Mammary epithelial cell (primary cell): ENCODE measurements at regions of chr9 and their contacts with region 1.

Region 1: GRCh38 chr9:111896353-111896958 is at the start of gene UGCG:
- DNase-seq: peak; percentile 92
- H3K4me3 ChIP-seq: peak within 1 kb of the TSS; percentile 76 to 94 (median 88)
- H3K27ac ChIP-seq: peak within 1 kb of the TSS; percentile 81
- H3K4me1 ChIP-seq: peaks cover 17% of the 10 kb centered on the region
- H3K27me3 ChIP-seq: no peaks in the 10 kb centered on the region
- CTCF ChIP-seq: no peak
- total RNA-seq, gene UGCG: 44.8 to 51.2 TPM

Region 2: GRCh38 chr9:111759762-111760639 is 136.5 kb before region 1 on chr9:
- CTCF ChIA-PET with region 1: no interaction called
- dilution Hi-C with region 1: no loop called
- in situ Hi-C with region 1: loop called in 1 of 2 experiments (anchors 25 kb)
- intact Hi-C with region 1: loop called (anchors 1 kb)
- DNase-seq: peak; percentile 69
- H3K4me3 ChIP-seq: no peak overlapping the region
- H3K27ac ChIP-seq: peak overlapping the region; percentile 8
- H3K4me1 ChIP-seq: no peaks in the 10 kb centered on the region
- H3K27me3 ChIP-seq: no peaks in the 10 kb centered on the region
- CTCF ChIP-seq: peak; percentile 59 to 61

Region 3: DNA sequence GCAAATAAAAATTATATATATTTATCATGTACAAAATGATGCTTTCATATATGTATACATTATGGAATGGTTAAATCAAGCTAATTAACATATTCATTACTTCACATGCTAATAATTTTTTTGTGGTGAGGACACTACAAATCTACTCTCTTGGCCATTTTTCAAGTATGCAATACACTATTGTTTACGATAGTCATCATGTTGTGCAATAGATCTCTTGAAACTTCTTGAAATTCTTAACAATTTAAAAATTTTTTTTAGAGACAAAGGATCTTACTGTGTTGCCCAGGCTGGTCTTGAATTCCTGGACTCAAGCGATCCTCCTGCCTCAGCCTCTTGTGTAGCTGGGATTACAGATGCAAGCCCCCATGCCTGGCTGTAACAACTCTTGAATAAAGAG is 56.5 kb before region 1 on chr9:
- CTCF ChIA-PET with region 1: no interaction called
- dilution Hi-C with region 1: no loop called
- in situ Hi-C with region 1: no loop called
- intact Hi-C with region 1: no loop called
- DNase-seq: no peak
- H3K4me3 ChIP-seq: no peak overlapping the region
- H3K27ac ChIP-seq: no peak overlapping the region
- H3K4me1 ChIP-seq: no peaks in the 10 kb centered on the region
- H3K27me3 ChIP-seq: no peaks in the 10 kb centered on the region
- CTCF ChIP-seq: no peak

Region 4: DNA sequence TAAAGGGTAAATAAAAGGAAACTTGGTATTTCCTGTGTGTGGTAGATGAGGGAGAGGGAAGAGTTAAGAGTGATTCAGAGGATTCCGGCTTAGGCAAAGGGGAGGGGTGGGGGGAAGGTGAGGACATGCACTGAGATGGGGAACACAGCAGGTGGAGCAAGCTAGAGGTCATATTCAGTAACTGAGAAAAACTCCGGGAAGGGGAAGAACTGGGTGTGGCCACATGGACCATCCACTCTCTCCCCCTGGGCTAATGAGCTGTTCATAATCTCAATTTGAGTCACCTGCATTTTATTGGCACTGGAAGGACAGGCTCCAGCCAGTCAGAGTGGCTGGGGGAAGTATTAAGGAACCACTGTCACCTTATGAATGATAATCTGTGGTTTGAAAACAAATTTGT is 44.9 kb before region 1 on chr9:
- CTCF ChIA-PET with region 1: no interaction called
- dilution Hi-C with region 1: no loop called
- in situ Hi-C with region 1: no loop called
- intact Hi-C with region 1: loop called (anchors 1 kb)
- DNase-seq: peak; percentile 88
- H3K4me3 ChIP-seq: no peak overlapping the region
- H3K27ac ChIP-seq: peak overlapping the region; percentile 44
- H3K4me1 ChIP-seq: peaks cover 19% of the 10 kb centered on the region
- H3K27me3 ChIP-seq: no peaks in the 10 kb centered on the region
- CTCF ChIP-seq: peak in 1 of 2 donors; percentile 29

Region 5: GRCh38 chr9:111937781-111938426 is 41.4 kb after region 1 on chr9:
- CTCF ChIA-PET with region 1: no interaction called
- dilution Hi-C with region 1: no loop called
- in situ Hi-C with region 1: no loop called
- intact Hi-C with region 1: loop called (anchors 5 kb)
- DNase-seq: peak; percentile 46
- H3K4me3 ChIP-seq: no peak overlapping the region
- H3K27ac ChIP-seq: no peak overlapping the region
- H3K4me1 ChIP-seq: peaks cover 12% of the 10 kb centered on the region
- H3K27me3 ChIP-seq: no peaks in the 10 kb centered on the region
- CTCF ChIP-seq: no peak

Region 6: GRCh38 chr9:112041536-112042243 is 145.2 kb after region 1 on chr9:
- CTCF ChIA-PET with region 1: no interaction called
- dilution Hi-C with region 1: no loop called
- in situ Hi-C with region 1: no loop called
- intact Hi-C with region 1: loop called (anchors 1 kb)
- DNase-seq: peak; percentile 99
- H3K4me3 ChIP-seq: no peak overlapping the region
- H3K27ac ChIP-seq: peak overlapping the region; percentile 52
- H3K4me1 ChIP-seq: peaks cover 60% of the 10 kb centered on the region
- H3K27me3 ChIP-seq: no peaks in the 10 kb centered on the region
- CTCF ChIP-seq: no peak

Region 7: DNA sequence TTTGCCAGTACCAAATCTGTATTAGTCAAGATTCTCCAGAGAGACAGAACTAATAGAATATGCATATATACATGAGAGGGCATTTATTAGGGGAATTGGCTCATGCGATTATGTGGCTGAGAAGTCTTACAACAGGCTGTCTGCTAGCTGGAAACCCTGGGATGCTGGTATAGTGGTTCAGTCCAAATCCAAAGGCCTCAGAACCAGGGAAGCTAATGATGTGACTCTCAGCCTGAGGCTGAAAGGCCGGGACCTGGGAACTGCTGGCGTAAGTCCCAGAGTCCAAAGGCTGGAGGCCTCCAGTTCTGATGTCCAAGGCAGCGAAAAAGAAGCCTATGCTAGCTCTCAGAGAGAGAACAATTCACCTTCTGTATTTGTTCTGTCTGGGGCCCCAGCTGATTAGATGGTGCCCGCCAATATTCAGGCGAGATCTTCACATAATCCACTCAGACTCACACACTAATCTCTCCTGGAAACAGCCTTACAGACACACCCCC is 674.3 kb after region 1 on chr9:
- CTCF ChIA-PET with region 1: no interaction called
- dilution Hi-C with region 1: no loop called
- in situ Hi-C with region 1: no loop called
- intact Hi-C with region 1: no loop called
- DNase-seq: no peak
- H3K4me3 ChIP-seq: no peak overlapping the region
- H3K27ac ChIP-seq: no peak overlapping the region
- H3K4me1 ChIP-seq: no peaks in the 10 kb centered on the region
- H3K27me3 ChIP-seq: no peaks in the 10 kb centered on the region
- CTCF ChIP-seq: no peak

Region 8: GRCh38 chr9:113150670-113151611 is 1254.5 kb after region 1 on chr9 and contains the start of gene SLC31A2:
- CTCF ChIA-PET with region 1: no interaction called
- dilution Hi-C with region 1: no loop called
- in situ Hi-C with region 1: no loop called
- intact Hi-C with region 1: loop called (anchors 5 kb)
- DNase-seq: peak; percentile 84
- H3K4me3 ChIP-seq: peak within 1 kb of the TSS; percentile 82 to 93 (median 92)
- H3K27ac ChIP-seq: peak within 1 kb of the TSS; percentile 89
- H3K4me1 ChIP-seq: peaks cover 44% of the 10 kb centered on the region
- H3K27me3 ChIP-seq: no peaks in the 10 kb centered on the region
- CTCF ChIP-seq: peak in 1 of 2 donors; percentile 51
- total RNA-seq, gene SLC31A2: 68.5 to 80.7 TPM